Sigmoid colon (tissue), 7 donors: ENCODE measurements at regions of chrX and their contacts with region 1.

Region 1: DNA sequence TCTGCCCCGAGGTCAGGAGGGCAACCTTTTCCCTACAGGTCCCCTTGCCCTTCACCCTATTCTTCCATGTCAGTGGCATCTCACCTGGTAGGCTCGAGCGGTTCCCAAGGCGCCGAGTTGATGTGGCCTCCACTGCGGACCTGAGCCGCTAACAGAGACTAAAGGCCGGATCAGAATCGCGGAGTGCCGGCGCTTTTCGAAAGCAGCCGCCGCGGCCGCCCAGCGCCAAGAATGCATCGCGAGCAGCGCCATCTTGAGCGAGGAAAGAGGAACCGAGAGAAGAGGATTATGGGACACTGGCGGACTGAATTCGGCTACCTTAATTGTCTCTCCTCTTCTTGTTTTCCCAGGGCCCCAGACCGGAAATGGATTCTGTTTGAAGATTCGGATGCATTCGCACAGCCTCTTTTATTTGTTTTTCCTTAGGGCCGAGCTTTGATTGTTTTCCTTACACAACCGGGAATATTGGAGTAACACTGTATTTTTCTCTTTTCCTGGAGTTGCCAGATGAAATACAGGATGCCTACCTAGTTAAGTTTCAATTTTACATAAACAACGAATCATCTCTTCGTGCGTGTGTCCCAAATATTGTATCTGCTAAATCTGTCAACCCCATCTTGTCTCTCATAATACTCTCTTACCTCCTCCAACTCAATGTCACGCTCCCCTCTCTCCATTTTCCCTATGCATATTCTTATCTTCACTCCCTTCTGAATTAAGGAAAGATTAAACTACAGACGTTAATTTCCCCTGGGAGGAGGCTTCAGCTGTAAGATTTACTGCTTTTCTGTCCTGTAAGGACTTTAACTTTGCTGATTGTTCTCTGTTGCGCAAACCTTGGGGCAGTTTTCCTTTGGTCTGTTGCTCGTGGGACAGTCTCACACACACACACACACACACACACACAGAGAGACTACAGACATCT is at the start of gene ABCB7:
- DNase-seq: peak; percentile 69
- H3K4me3 ChIP-seq: peak within 1 kb of the TSS; percentile 62 to 64 (median 63)
- H3K27ac ChIP-seq: peak within 1 kb of the TSS; percentile 79 to 85 (median 82)
- H3K4me1 ChIP-seq: peaks cover 0 to 15% (median 5%) of the 10 kb centered on the region in 4 donors
- H3K27me3 ChIP-seq: no peaks in the 10 kb centered on the region
- CTCF ChIP-seq: no peak
- EP300 ChIP-seq: no peak
- POLR2A ChIP-seq: peak; percentile 17 to 26
- total RNA-seq, gene ABCB7: 37.6 to 88.5 (median 63.6) TPM

Region 2: DNA sequence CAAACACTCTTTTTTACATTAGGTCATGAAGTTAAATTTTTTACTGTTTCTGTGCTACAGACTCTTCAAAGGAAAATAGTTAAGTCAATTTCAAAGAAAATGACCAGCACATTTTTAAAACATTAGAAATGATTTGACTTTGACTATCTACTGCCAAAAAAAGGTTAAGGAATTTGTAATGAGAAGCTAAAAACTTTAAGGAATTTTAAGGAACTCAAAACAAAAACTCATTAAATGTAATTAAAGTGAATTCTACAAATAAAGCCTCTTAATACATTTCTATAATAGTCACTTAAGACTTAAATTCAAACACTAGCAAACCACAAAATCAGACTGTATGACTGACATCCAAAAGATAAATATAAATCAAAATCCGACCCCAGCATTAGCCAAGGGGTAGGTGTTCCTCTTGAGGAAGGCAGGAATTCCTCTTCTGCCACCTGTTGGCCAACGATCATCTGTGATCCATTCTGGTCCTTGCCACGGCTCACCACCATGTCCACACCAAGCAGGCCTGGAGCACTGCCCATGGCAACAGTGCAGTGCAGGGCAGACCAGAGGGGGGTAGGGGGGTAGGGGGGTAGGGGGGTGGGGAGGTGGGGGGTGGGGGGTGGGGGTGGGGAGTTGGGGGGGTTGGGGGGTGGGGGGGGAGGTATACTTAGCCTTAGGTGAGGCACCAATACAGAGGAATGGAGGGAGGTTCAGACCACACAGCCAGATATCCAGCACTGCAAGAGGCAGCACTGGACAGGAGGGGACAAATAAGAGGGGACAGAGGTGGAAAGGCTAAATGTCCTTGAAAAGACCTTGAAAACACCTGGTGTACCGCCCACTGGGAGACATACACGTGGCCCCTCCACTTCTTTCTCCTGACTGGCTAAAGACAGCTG is 1305.9 kb before region 1 on chrX:
- intact Hi-C with region 1: loop called (anchors 5 kb)
- DNase-seq: peak; percentile 75
- H3K4me3 ChIP-seq: peak overlapping the region in 2 of 4 donors; percentile 19 to 64
- H3K27ac ChIP-seq: peak overlapping the region in 2 of 4 donors; percentile 58 to 72
- H3K4me1 ChIP-seq: peaks cover 0 to 32% (median 0%) of the 10 kb centered on the region in 4 donors
- H3K27me3 ChIP-seq: no peaks in the 10 kb centered on the region
- CTCF ChIP-seq: no peak
- EP300 ChIP-seq: no peak
- POLR2A ChIP-seq: no peak

Region 3: DNA sequence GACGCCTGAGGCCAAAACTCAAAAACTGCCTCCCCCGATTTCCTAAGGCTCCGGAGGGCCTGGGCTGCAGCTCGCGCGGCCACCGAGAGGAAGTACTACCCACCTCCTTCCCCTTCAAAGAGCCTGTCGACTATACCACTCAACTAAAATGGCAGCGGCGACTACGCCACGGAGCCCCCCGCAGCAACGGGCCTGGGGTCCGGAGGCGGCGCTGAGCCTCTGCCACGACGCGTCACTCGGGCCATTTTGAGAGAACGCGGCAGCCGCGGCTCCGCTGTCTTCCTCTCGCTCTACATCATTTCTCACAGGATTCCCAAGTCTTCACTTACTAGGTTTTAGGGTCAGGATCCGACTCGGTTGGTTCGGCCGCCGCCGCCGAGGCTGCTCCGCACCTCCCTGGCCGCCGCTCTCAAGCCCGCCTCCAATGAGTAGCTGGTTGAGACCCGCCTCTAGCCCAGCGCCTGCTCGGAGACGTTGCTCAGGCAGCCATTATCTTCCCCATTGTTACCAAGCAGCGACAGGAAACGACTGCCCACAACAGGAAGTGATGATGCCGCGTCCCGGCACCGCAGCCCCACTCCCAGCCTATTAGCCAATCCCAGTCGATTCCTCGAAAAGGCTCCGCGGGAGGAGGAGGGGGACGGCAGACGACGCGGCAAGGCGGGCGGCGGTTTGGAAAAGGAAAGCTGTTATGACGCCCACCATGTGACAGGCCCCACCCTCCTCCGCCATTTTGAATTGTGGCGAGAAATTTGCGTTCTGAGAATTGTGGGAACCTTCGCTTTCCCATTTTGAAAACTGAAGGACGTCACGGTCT is 542.0 kb before region 1 on chrX and contains the start of gene RLIM:
- intact Hi-C with region 1: loop called (anchors 5 kb)
- DNase-seq: peak; percentile 97
- H3K4me3 ChIP-seq: peak within 1 kb of the TSS; percentile 66 to 85 (median 75)
- H3K27ac ChIP-seq: peak within 1 kb of the TSS; percentile 94 to 99 (median 96)
- H3K4me1 ChIP-seq: peaks cover 0 to 9% (median 2%) of the 10 kb centered on the region in 4 donors
- H3K27me3 ChIP-seq: no peaks in the 10 kb centered on the region
- CTCF ChIP-seq: no peak
- EP300 ChIP-seq: peak in 2 of 4 donors; percentile 34 to 47
- POLR2A ChIP-seq: peak; percentile 37 to 72
- total RNA-seq, gene RLIM: 20.4 to 36.4 (median 24.0) TPM

Region 4: DNA sequence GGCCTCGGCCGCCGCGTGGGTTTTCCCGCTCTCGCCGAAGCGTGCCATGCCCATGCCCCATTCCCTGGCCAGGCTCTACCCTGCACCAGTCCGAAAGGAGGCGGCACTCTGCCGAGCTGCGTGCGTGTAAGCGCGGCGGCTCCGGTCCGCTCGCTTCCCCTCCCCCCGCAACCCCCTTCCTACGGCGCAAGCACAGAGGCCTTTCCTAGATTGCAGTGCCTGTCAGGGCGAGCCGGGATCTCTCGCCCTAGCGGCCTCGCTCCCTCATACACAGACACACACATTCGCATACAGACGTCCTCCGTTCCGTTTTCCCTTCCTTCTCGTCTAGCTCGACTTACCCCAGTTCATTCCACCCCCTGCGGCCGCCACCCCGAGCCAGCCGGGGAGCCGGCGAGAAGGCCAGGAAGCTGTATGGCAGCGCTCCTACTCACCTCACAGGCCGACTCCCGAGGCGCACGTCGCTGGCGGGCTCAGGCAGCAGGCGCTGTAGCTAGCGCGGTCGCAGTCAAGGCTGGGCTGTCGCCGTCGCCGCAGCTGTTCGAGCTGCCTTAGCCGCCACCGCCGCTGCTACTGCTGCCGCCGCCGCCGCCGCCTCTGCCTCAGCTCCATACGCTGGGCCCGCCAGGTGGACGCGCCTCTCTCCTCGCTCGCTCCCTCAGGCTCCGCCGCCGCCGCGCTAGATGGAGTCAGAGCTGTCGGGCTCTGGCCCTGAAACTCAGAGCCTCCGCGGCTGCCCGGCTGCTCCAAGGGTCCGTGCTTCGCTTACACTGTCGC is 231.6 kb before region 1 on chrX:
- intact Hi-C with region 1: loop called (anchors 10 kb)
- DNase-seq: peak; percentile 80
- H3K4me3 ChIP-seq: peak overlapping the region; percentile 45 to 62 (median 59)
- H3K27ac ChIP-seq: peak overlapping the region; percentile 80 to 89 (median 84)
- H3K4me1 ChIP-seq: peaks cover 0 to 12% (median 0%) of the 10 kb centered on the region in 4 donors
- H3K27me3 ChIP-seq: no peaks in the 10 kb centered on the region
- CTCF ChIP-seq: no peak
- EP300 ChIP-seq: no peak
- POLR2A ChIP-seq: no peak

Region 5: GRCh38 chrX:75273483-75273882 is 117.2 kb after region 1 on chrX:
- intact Hi-C with region 1: loop called (anchors 5 kb)
- DNase-seq: no peak
- H3K4me3 ChIP-seq: peak overlapping the region; percentile 41 to 69 (median 64)
- H3K27ac ChIP-seq: peak overlapping the region; percentile 88 to 94 (median 90)
- H3K4me1 ChIP-seq: peaks cover 0 to 29% (median 14%) of the 10 kb centered on the region in 4 donors
- H3K27me3 ChIP-seq: no peaks in the 10 kb centered on the region
- CTCF ChIP-seq: no peak
- EP300 ChIP-seq: no peak
- POLR2A ChIP-seq: no peak

Region 6: DNA sequence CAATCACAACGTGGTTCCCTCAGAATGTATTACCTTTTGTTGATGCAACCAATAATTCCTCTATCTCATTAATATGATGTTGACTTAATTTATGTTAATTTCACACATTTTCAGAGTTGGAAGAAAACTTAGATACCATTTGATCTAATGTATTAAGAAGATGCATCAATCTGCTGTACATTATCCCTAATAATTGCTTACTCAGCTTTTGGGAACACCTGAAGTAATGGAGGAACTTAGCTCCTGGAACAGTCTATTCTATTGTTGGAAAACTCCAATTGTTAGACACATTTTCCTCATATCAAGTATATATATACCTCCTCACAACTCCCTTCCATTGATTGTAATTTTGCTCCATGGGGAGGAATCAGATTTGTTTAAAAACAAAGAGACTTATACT is 327.7 kb after region 1 on chrX:
- intact Hi-C with region 1: no loop called
- DNase-seq: no peak
- H3K4me3 ChIP-seq: no peak overlapping the region
- H3K27ac ChIP-seq: no peak overlapping the region
- H3K4me1 ChIP-seq: no peaks in the 10 kb centered on the region
- H3K27me3 ChIP-seq: no peaks in the 10 kb centered on the region
- CTCF ChIP-seq: no peak
- EP300 ChIP-seq: no peak
- POLR2A ChIP-seq: no peak